ENCODE measurements at regions of chr15 and their contacts with region 1.

Region 1: DNA sequence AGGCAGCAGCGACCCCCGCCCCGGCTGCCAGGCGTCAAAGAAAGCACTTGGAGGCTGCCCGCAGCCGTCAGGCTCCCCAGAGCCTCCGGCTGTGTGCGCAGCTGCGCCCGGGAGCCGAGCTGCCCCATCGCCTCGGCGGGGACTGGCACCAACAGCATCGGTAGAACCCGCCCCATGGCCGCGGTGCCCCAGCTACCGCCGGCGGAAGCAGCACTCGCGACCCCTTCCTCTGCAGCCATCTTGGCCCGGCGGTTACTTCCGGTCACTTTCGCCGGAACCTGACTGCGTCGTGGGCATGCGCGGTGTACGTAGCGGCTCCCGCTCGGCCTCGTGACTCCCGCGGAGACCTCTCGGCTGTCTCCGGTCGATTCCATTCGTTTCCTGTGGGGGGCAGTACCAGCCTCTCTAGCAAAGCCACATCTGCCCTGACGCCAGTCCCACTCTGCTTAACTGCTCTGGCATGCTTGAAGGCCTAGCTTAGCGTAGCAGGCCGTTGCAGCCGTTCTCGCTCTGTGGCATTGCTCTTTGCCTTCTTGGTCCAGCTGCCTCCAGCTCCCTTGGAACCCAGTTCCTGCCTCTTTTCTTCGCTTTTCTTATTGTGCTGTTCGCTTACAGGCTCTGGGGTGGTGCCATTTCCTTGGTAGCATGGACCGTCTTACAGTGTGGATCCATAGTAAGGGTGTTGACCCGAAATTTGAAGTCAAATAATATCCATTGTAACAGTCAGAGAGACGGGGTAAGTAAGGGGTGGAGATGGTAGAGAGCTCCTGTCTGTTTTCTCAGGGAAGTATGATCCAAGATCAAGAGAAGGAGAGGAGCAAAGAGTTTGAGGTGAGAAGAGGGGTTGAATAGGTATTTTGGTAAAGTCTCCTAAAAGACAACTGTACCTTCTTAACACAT is at the start of gene SPG11:
- DNase-seq: peak; percentile 88
- H3K4me3 ChIP-seq: peak within 1 kb of the TSS; percentile 96 to 100 (median 100)
- H3K27ac ChIP-seq: peak within 1 kb of the TSS; percentile 98 to 100 (median 98)
- H3K4me1 ChIP-seq: peaks cover 9 to 36% (median 10%) of the 10 kb centered on the region in 3 donors
- H3K27me3 ChIP-seq: no peaks in the 10 kb centered on the region
- CTCF ChIP-seq: peak; percentile 91 to 99 (median 98)
- POLR2A ChIP-seq: peak in 3 of 4 donors; percentile 65 to 96 (median 85)
- total RNA-seq, gene SPG11: 43.9 to 84.3 (median 50.0) TPM

Region 2: DNA sequence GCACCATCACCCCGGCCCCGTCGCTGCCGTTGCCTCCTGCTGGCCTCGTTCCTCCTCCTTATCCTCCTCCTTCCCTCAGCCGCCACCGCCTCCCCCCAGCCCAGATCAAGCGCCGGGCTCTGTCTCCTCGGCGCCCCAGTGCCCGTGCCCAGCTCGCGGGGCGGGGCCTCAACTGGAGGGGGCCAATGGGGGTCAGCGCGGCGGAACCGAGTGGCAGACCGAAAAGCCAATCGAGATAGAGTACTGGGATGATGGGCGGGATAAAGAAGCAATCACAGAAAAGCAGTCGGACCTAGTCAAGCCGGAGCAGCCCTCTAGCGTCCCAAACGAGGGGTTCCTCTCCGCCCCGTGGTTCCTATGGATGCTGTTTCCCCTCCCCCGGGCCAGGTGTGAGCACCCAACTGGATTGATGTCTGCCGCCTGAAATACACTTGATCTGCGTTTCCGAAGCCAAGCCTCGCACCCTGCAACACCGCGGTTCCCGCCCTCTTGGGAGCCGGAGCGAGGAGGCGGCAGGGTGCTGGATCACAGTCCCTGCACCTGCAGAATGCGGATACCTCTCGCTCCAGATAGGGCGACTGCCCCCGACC is 468.4 kb before region 1 on chr15 and contains the start of gene FRMD5:
- intact Hi-C with region 1: no loop called
- DNase-seq: peak; percentile 20
- H3K4me3 ChIP-seq: peak within 1 kb of the TSS; percentile 42 to 64 (median 48)
- H3K27ac ChIP-seq: no peak within 1 kb of the TSS
- H3K4me1 ChIP-seq: peaks cover 7 to 24% (median 18%) of the 10 kb centered on the region in 3 donors
- H3K27me3 ChIP-seq: peaks cover 0 to 86% (median 6%) of the 10 kb centered on the region in 4 donors
- CTCF ChIP-seq: peak in 4 of 6 experiments; percentile 10 to 35 (median 24)
- POLR2A ChIP-seq: no peak
- total RNA-seq, gene FRMD5: 0.19 TPM in 1 of 4 donors, not detected in the others

Region 3: DNA sequence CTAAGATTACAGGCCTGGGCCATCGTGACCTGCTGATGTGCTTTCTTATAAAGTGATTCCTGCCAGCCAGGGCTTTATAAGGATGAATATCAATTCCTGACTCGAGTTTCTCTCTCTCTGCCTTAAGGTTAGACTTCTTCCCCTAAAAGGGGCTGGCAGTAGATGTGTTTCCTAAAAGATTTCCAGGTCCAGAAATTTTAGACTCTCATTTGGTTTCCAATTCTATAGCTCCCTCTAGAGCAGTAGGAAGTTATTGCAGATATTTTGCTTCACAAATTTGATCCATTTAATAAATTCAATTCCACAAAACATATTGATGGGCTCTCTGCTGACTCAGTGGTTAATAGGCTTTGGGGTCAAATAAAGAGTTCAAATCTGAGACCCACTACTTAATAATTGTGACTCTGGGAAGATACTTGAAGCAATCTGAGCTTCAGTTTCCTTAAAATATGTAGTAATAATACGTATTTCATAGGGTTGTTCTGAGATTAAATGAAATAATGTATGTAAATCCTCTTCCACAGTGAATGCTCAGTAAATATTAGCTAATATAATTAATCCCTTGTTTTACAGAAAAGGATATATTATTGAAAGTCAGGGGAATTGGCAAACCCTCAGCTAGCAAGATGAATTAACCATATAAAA is 74.8 kb after region 1 on chr15:
- intact Hi-C with region 1: loop called (anchors 10 kb)
- DNase-seq: no peak
- H3K4me3 ChIP-seq: no peak overlapping the region
- H3K27ac ChIP-seq: no peak overlapping the region
- H3K4me1 ChIP-seq: peaks cover 0 to 16% (median 0%) of the 10 kb centered on the region in 3 donors
- H3K27me3 ChIP-seq: no peaks in the 10 kb centered on the region
- CTCF ChIP-seq: peak; percentile 49 to 75 (median 70)
- POLR2A ChIP-seq: no peak

Measured in esophagus squamous epithelium (tissue), 5 donors.